ENCODE measurements at regions of chr19 and their contacts with region 1.

Region 1: GRCh38 chr19:47190167-47190727 is 40.8 kb downstream of the BBC3 start:
- DNase-seq: peak; percentile 88
- ATAC-seq: peak; percentile 40
- H3K4me3 Mint-ChIP-seq: peak overlapping the region; percentile 45
- H3K27ac Mint-ChIP-seq: peak overlapping the region; percentile 84
- H3K4me1 Mint-ChIP-seq: peaks cover 62% of the 10 kb centered on the region
- H3K27me3 Mint-ChIP-seq: no peaks in the 10 kb centered on the region
- CTCF ChIP-seq: no peak

Region 2: GRCh38 chr19:47152224-47153017 is 37.8 kb before region 1 on chr19:
- CTCF ChIA-PET with region 1: interaction called, 69 read pairs
- POLR2A ChIA-PET with region 1: interaction called, 35 read pairs
- intact Hi-C with region 1: no loop called
- DNase-seq: no peak
- ATAC-seq: no peak
- H3K4me3 Mint-ChIP-seq: no peak overlapping the region
- H3K27ac Mint-ChIP-seq: peak overlapping the region; percentile 23
- H3K4me1 Mint-ChIP-seq: peaks cover 45% of the 10 kb centered on the region
- H3K27me3 Mint-ChIP-seq: no peaks in the 10 kb centered on the region
- CTCF ChIP-seq: no peak

Region 3: GRCh38 chr19:47157431-47158321 is 32.6 kb before region 1 on chr19:
- CTCF ChIA-PET with region 1: interaction called, 69 read pairs
- POLR2A ChIA-PET with region 1: interaction called, 35 read pairs
- intact Hi-C with region 1: loop called (anchors 2 kb)
- DNase-seq: peak; percentile 60
- ATAC-seq: peak; percentile 18
- H3K4me3 Mint-ChIP-seq: peak overlapping the region; percentile 40
- H3K27ac Mint-ChIP-seq: peak overlapping the region; percentile 86
- H3K4me1 Mint-ChIP-seq: peaks cover 65% of the 10 kb centered on the region
- H3K27me3 Mint-ChIP-seq: no peaks in the 10 kb centered on the region
- CTCF ChIP-seq: no peak

Region 4: DNA sequence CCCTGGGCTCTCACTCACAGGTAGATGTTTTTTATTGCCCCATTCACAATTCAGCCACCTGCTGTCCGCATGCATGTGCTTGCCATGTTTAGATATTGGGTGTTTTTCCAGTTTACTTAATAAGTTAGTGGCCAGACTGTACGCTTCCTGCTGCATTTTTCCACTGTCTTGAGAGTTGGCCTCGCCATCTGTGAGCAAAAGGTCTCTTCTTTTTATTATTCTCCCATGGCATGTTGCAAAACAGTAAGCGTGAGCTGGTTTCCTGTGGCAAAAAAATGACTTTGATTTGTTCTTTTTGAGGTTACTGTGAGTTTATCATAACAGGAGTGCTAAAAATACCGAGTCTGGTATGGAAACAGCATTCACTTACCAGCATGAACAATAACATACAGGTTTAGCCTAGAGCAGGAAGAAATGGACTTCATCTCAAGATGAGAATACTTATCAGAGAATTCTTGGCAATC is 13.6 kb before region 1 on chr19:
- CTCF ChIA-PET with region 1: interaction called, 25 read pairs
- POLR2A ChIA-PET with region 1: interaction called, 13 read pairs
- intact Hi-C with region 1: no loop called
- DNase-seq: peak; percentile 62
- ATAC-seq: peak; percentile 79
- H3K4me3 Mint-ChIP-seq: peak overlapping the region; percentile 26
- H3K27ac Mint-ChIP-seq: peak overlapping the region; percentile 89
- H3K4me1 Mint-ChIP-seq: peaks cover 62% of the 10 kb centered on the region
- H3K27me3 Mint-ChIP-seq: no peaks in the 10 kb centered on the region
- CTCF ChIP-seq: no peak

Region 5: GRCh38 chr19:47225746-47226425 is 35.6 kb after region 1 on chr19:
- CTCF ChIA-PET with region 1: interaction called, 3 read pairs
- POLR2A ChIA-PET with region 1: interaction called, 10 read pairs
- intact Hi-C with region 1: loop called (anchors 5 kb)
- DNase-seq: peak; percentile 86
- ATAC-seq: peak; percentile 63
- H3K4me3 Mint-ChIP-seq: peak overlapping the region; percentile 82
- H3K27ac Mint-ChIP-seq: peak overlapping the region; percentile 72
- H3K4me1 Mint-ChIP-seq: peaks cover 8% of the 10 kb centered on the region
- H3K27me3 Mint-ChIP-seq: no peaks in the 10 kb centered on the region
- CTCF ChIP-seq: peak; percentile 49

Region 6: GRCh38 chr19:47330466-47330869 is 140.2 kb after region 1 on chr19:
- CTCF ChIA-PET with region 1: no interaction called
- POLR2A ChIA-PET with region 1: no interaction called
- intact Hi-C with region 1: no loop called
- DNase-seq: no peak
- ATAC-seq: no peak
- H3K4me3 Mint-ChIP-seq: no peak overlapping the region
- H3K27ac Mint-ChIP-seq: no peak overlapping the region
- H3K4me1 Mint-ChIP-seq: no peaks in the 10 kb centered on the region
- H3K27me3 Mint-ChIP-seq: peaks cover 1% of the 10 kb centered on the region
- CTCF ChIP-seq: no peak

Measured in activated CD8-positive, alpha-beta T cell treated with anti-CD3 and anti-CD28 coated beads for 36 hours (primary cell).